Activated T-helper 1 cell treated with anti-CD3 and anti-CD28 coated beads, Interleukin-12 subunit alpha, Interleukin-12 subunit beta, Interleukin-2, Interleukin-4 antibody, amounts not matched to agents 30 ng/mL and 10 ng/mL and 1 ng/mL, durations not matched to agents 14 hours and 24 hours and 36 hours (primary cell): ENCODE measurements at regions of chr4 and their contacts with region 1.

Region 1: GRCh38 chr4:88792268-88792781 is 94.7 kb upstream of the NAP1L5 start:
- DNase-seq: no peak
- H3K4me3 Mint-ChIP-seq: no peak overlapping the region
- H3K27ac Mint-ChIP-seq: no peak overlapping the region
- H3K4me1 Mint-ChIP-seq: peaks cover 21% of the 10 kb centered on the region
- H3K27me3 Mint-ChIP-seq: peaks cover 21% of the 10 kb centered on the region

Region 2: GRCh38 chr4:88158489-88159243 is 633.7 kb before region 1 on chr4 and contains the start of gene ABCG2:
- intact Hi-C with region 1: loop called (anchors 2 kb)
- DNase-seq: peak; percentile 46
- H3K4me3 Mint-ChIP-seq: peak within 1 kb of the TSS; percentile 80
- H3K27ac Mint-ChIP-seq: peak within 1 kb of the TSS; percentile 16
- H3K4me1 Mint-ChIP-seq: peaks cover 17% of the 10 kb centered on the region
- H3K27me3 Mint-ChIP-seq: peaks cover 18% of the 10 kb centered on the region
- total RNA-seq, gene ABCG2: 0.34 TPM in 2 replicates

Region 3: DNA sequence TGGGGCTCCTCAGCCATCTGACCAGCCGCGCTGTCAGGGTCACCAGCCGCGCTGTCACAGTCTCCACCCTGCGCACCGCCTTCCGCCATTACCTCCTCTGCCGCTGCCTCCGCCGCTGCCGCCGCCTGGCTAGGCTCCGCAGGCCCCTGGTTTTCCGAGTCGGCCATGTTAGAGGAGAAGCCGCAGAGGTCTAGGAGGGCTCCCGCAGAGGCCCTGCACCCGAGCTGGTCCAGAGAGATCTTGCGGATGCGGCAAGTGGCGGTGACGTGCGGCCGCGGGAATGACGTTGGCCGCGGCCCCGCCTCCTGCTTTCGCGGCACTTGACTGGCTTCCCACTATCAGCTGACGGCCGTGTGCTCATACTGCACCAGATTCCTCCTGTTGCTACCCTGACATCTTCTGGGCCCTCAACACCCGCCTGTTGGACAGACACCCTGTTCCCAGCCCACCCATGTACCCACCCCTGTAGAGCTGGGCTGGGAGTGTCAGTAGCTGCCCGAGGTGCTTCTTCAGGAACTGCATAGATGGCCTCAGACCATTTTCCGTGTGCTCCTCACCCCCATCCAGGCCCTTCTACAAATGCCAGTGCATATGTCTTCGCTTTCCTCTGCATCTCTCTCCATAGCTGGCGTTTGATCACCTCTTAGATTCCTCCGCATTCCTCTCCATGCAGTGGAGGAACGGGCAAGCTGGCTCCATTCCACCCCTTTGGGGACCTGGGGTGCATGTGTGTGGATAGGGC is 94.6 kb before region 1 on chr4 and contains the start of gene NAP1L5:
- intact Hi-C with region 1: loop called (anchors 5 kb)
- DNase-seq: peak; percentile 61
- H3K4me3 Mint-ChIP-seq: peak within 1 kb of the TSS; percentile 88
- H3K27ac Mint-ChIP-seq: peak within 1 kb of the TSS; percentile 83
- H3K4me1 Mint-ChIP-seq: no peaks in the 10 kb centered on the region
- H3K27me3 Mint-ChIP-seq: peaks cover 2% of the 10 kb centered on the region
- total RNA-seq, gene NAP1L5: 5.5 and 6.1 TPM in 2 replicates

Region 4: GRCh38 chr4:88803600-88804096 is 11.3 kb after region 1 on chr4:
- intact Hi-C with region 1: loop called (anchors 1 kb)
- DNase-seq: peak; percentile 17
- H3K4me3 Mint-ChIP-seq: no peak overlapping the region
- H3K27ac Mint-ChIP-seq: no peak overlapping the region
- H3K4me1 Mint-ChIP-seq: peaks cover 13% of the 10 kb centered on the region
- H3K27me3 Mint-ChIP-seq: peaks cover 16% of the 10 kb centered on the region

Region 5: DNA sequence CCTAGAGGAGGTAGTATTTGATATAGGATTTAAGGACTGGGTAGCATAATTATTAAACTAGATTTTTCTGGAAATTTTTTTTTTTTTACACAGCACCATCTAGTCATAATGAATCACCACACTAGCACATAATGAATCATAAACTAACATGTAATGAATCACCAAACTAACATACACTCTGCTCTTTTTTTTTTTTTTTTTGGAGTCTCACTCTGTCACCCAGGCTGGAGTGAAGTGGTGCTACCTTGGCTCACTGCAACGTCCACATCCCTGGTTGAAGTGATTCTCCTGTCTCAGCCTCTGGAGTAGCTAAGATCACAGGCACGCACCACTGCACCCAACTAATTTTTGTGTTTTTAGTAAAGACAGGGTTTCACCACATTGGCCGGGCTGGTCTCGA is 172.1 kb after region 1 on chr4:
- intact Hi-C with region 1: loop called (anchors 5 kb)
- DNase-seq: no peak
- H3K4me3 Mint-ChIP-seq: no peak overlapping the region
- H3K27ac Mint-ChIP-seq: no peak overlapping the region
- H3K4me1 Mint-ChIP-seq: peaks cover 18% of the 10 kb centered on the region
- H3K27me3 Mint-ChIP-seq: peaks cover 9% of the 10 kb centered on the region